Heart left ventricle (tissue), 16 donors: ENCODE measurements at regions of chr5 and their contacts with region 1.

Region 1: DNA sequence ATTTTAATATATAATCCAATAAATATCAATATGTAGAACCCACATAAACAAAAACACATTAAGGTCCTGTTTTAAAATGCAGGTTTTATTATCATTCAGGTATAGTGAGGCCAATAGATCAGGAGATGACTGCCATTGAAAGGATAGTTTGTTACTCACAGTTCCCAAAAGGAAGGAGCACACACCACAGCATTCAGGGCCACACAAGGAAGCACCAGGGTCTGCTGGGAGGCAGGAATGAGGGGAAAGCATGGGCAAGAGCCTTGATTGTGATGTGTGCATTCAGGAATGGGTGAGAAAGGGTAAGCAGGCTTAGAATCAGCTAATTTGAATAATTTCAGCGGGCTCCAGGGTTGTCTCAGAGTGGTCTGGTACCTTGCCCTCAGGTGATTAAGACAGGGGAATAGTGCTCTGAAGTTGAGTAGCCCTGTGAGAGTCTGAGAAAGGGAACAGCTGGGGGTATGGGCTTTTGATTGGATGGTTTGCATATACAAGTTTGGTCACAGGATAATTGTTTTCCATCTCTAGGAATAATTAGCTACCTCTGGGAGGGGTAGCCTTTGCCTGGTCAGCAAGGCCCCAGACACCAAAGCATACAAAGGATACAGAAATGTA is 19.8 kb upstream of the OTULIN start:
- DNase-seq: no peak
- ATAC-seq: no peak
- H3K4me3 ChIP-seq: no peak overlapping the region
- H3K27ac ChIP-seq: no peak overlapping the region
- H3K4me1 ChIP-seq: peaks cover 0 to 4% (median 0%) of the 10 kb centered on the region in 12 donors
- H3K27me3 ChIP-seq: peaks cover 0 to 7% (median 0%) of the 10 kb centered on the region in 9 donors
- CTCF ChIP-seq: no peak
- POLR2A ChIP-seq: no peak

Region 2: GRCh38 chr5:13994621-13995253 is 650.0 kb before region 1 on chr5:
- intact Hi-C with region 1: loop called (anchors 5 to 10 kb)
- DNase-seq: no peak
- ATAC-seq: no peak
- H3K4me3 ChIP-seq: no peak overlapping the region
- H3K27ac ChIP-seq: no peak overlapping the region
- H3K4me1 ChIP-seq: no peaks in the 10 kb centered on the region
- H3K27me3 ChIP-seq: peaks cover 0 to 4% (median 0%) of the 10 kb centered on the region in 9 donors
- CTCF ChIP-seq: no peak
- POLR2A ChIP-seq: no peak

Region 3: GRCh38 chr5:14399054-14399692 is 245.6 kb before region 1 on chr5:
- intact Hi-C with region 1: loop called (anchors 2 to 10 kb)
- DNase-seq: no peak
- ATAC-seq: peak in 2 of 4 donors; percentile 50
- H3K4me3 ChIP-seq: no peak overlapping the region
- H3K27ac ChIP-seq: peak overlapping the region in 2 of 12 donors; percentile 11 to 28
- H3K4me1 ChIP-seq: peaks cover 0 to 29% (median 8%) of the 10 kb centered on the region in 12 donors
- H3K27me3 ChIP-seq: no peaks in the 10 kb centered on the region
- CTCF ChIP-seq: peak; percentile 52 to 85 (median 75)
- POLR2A ChIP-seq: no peak

Region 4: GRCh38 chr5:14505310-14506032 is 139.3 kb before region 1 on chr5:
- intact Hi-C with region 1: loop called in 3 of 10 experiments (anchors 5 to 10 kb)
- DNase-seq: no peak
- ATAC-seq: no peak
- H3K4me3 ChIP-seq: no peak overlapping the region
- H3K27ac ChIP-seq: no peak overlapping the region
- H3K4me1 ChIP-seq: peaks cover 0 to 10% (median 0%) of the 10 kb centered on the region in 12 donors
- H3K27me3 ChIP-seq: no peaks in the 10 kb centered on the region
- CTCF ChIP-seq: peak in 1 of 12 donors; percentile 3
- POLR2A ChIP-seq: no peak